ENCODE measurements at regions of chr12 and their contacts with region 1.

Region 1: GRCh38 chr12:751192-751998 is 984 bp upstream of the WNK1 start:
- DNase-seq: peak; percentile 92 to 97 (median 94)
- ATAC-seq: peak; percentile 61
- H3K4me3 ChIP-seq: peak overlapping the region; percentile 20 to 92
- H3K27ac ChIP-seq: peak overlapping the region; percentile 81 to 98
- H3K4me1 ChIP-seq: peaks cover 3 to 34% of the 10 kb centered on the region in 2 donors
- H3K27me3 ChIP-seq: no peaks in the 10 kb centered on the region
- CTCF ChIP-seq: peak; percentile 49 to 81

Region 2: GRCh38 chr12:569803-570434 is 181.5 kb before region 1 on chr12:
- intact Hi-C with region 1: loop called in 1 of 2 experiments (anchors 5 kb)
- DNase-seq: peak; percentile 79 to 97 (median 87)
- ATAC-seq: peak; percentile 86
- H3K4me3 ChIP-seq: peak overlapping the region; percentile 45 to 55
- H3K27ac ChIP-seq: peak overlapping the region; percentile 81 to 87
- H3K4me1 ChIP-seq: peaks cover 7 to 31% of the 10 kb centered on the region in 2 donors
- H3K27me3 ChIP-seq: no peaks in the 10 kb centered on the region
- CTCF ChIP-seq: peak; percentile 86 to 95

Region 3: GRCh38 chr12:894226-894625 is 142.8 kb after region 1 on chr12:
- intact Hi-C with region 1: no loop called
- DNase-seq: no peak
- ATAC-seq: no peak
- H3K4me3 ChIP-seq: no peak overlapping the region
- H3K27ac ChIP-seq: no peak overlapping the region
- H3K4me1 ChIP-seq: peaks cover 0 to 7% of the 10 kb centered on the region in 2 donors
- H3K27me3 ChIP-seq: no peaks in the 10 kb centered on the region
- CTCF ChIP-seq: no peak

Measured in left lung (tissue), 14 donors.